Calu3 (cell line): ENCODE measurements at regions of chr2 and their contacts with region 1.

Region 1: GRCh38 chr2:64653349-64654062 is at the start of gene SERTAD2:
- DNase-seq: peak; percentile 90
- H3K4me3 Mint-ChIP-seq: peak within 1 kb of the TSS; percentile 78
- H3K27ac Mint-ChIP-seq: peak within 1 kb of the TSS; percentile 72
- H3K4me1 Mint-ChIP-seq: peaks cover 42% of the 10 kb centered on the region
- H3K27me3 Mint-ChIP-seq: no peaks in the 10 kb centered on the region
- CTCF ChIP-seq: peak; percentile 9
- total RNA-seq, gene SERTAD2: 19.2 and 19.4 TPM in 2 replicates

Region 2: GRCh38 chr2:64839844-64840243 is 186.3 kb after region 1 on chr2:
- CTCF ChIA-PET with region 1: interaction called, 11 read pairs
- intact Hi-C with region 1: loop called (anchors 10 kb)
- DNase-seq: no peak
- H3K4me3 Mint-ChIP-seq: no peak overlapping the region
- H3K27ac Mint-ChIP-seq: no peak overlapping the region
- H3K4me1 Mint-ChIP-seq: peaks cover 53% of the 10 kb centered on the region
- H3K27me3 Mint-ChIP-seq: no peaks in the 10 kb centered on the region
- CTCF ChIP-seq: no peak